H1 (cell line): ENCODE measurements at regions of chr15 and their contacts with region 1.

Region 1: DNA sequence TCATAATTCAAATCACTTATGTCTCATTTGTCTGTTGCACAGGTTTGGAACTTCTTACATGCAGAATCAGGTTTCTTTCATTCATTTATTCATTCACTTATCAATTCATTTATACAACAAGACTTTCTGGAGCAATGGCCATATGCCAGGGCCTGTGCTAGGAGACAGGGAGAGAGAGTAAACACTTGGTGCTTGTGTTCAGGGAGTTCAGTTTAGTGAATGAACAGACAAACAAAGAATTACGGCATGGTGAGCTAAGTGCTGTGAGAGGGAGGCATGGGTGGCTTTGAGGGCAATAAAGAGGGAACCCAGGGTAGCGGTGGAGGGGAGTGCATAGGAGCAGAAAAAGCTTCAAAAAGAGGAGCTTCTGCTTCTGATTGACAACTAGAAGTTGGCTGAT is 8.5 kb upstream of the IREB2 start:
- DNase-seq: no peak
- H3K4me3 ChIP-seq: no peak overlapping the region
- H3K27ac ChIP-seq: no peak overlapping the region
- H3K4me1 ChIP-seq: no peaks in the 10 kb centered on the region
- H3K27me3 ChIP-seq: no peaks in the 10 kb centered on the region; a peak in 1 of 7 replicates
- CTCF ChIP-seq: no peak
- EP300 ChIP-seq: no peak
- POLR2A ChIP-seq: no peak
- RAD21 ChIP-seq: no peak

Region 2: DNA sequence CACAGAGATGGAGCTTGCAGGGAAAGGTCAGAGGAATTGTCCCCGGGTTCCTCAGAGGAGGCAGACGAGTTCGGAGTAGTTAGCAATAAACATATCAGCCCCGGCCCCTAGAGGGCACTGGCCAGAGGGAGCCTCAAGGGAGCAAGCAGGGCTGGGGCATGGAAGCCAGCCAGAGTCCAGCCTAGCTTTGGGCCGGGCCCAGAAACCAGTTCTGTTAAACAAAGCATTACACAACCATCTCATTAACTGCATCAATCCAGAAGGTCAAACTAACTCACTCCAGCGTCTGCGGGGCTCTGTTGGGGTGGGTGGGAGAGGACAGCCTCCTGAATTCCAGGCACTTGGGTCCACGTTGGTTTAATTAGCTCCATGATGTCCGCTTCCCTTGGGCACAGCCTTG is 32.5 kb before region 1 on chr15:
- CTCF ChIA-PET with region 1: interaction called, 17 read pairs
- POLR2A ChIA-PET with region 1: no interaction called
- DNase-seq: peak in 1 of 2 experiments; percentile 71
- H3K4me3 ChIP-seq: no peak overlapping the region
- H3K27ac ChIP-seq: no peak overlapping the region
- H3K4me1 ChIP-seq: peaks cover 4 to 31% (median 10%) of the 10 kb centered on the region in 4 experiments
- H3K27me3 ChIP-seq: peaks cover 0 to 2% (median 0%) of the 10 kb centered on the region in 4 experiments; a peak in 2 of 7 replicates
- CTCF ChIP-seq: peak; percentile 63 to 75 (median 66)
- EP300 ChIP-seq: no peak
- POLR2A ChIP-seq: no peak
- RAD21 ChIP-seq: peak; percentile 32 to 63

Region 3: DNA sequence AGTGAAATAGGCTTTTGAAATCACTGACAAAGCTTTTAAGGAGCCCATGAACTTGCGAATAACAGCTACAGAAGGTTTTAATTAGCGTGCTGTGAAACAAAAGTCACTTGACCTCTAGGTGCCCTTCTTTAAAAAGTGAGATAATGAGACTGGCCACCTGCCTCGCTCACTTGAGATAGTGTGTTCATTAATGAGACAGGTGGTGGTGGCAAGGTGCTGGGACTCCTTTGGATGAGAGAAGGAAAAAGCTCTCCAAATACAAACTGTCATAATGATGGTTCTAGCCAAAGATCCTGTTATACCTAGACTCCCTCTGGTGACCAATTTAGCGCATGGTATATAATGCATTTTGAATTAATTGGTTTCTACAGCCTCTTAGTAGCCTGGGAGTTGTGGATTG is 14.2 kb before region 1 on chr15:
- CTCF ChIA-PET with region 1: interaction called, 13 read pairs
- POLR2A ChIA-PET with region 1: interaction called, 5 read pairs
- DNase-seq: no peak
- H3K4me3 ChIP-seq: no peak overlapping the region
- H3K27ac ChIP-seq: no peak overlapping the region
- H3K4me1 ChIP-seq: peaks cover 0 to 4% (median under 1%) of the 10 kb centered on the region in 4 experiments; a peak in 3 of 7 replicates
- H3K27me3 ChIP-seq: no peaks in the 10 kb centered on the region
- CTCF ChIP-seq: peak in 2 of 3 experiments; percentile 31 to 44; a peak in 2 of 4 replicates
- EP300 ChIP-seq: no peak
- POLR2A ChIP-seq: no peak
- RAD21 ChIP-seq: peak; percentile 60 to 66